ENCODE measurements at regions of chr9 and their contacts with region 1.

Region 1: GRCh38 chr9:94805585-94805984 is 79.1 kb downstream of the AOPEP start:
- DNase-seq: no peak
- ATAC-seq: peak; percentile 38

Region 2: DNA sequence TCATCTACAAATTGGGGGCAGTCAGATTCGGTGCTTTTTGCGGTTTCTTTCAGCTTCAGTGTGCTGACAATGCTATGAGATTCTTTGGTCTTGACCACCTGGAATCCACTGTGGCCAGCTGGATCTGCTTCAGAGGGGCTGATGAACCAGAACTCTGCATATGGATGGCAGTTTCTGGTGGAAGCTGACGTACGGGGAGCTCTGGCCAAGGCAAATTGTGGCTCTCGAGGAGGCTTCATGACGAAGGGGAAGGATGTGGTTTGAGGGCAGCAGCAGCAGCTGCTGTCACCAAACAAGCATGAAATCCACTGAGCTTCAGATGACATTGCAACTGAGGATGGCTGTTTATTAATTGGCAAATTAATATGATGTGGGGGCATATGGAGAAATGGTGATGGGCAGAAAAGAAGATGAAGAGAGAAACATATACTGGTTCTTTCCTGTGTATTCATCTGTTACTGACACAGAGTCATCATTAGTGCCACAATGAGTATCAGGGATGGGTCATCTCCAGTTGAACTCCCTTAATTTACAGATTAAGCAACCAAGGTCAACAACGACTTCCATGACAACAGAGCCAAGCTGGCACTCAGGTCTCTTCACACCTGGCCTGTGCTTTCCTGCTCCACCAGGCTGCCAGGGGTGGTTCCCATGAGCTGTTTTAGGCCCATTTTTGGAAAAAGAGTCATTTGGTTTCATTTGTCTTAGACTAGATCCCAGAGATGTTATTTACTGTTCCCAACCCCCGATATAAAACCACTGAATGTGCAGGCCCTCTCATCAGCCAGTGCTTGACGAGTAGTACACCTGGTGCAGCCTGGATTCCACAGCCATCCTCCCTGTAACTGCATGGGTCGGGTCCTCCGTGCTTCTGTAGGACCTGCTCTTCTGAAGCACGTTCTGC is 55.6 kb after region 1 on chr9:
- intact Hi-C with region 1: loop called (anchors 10 kb)
- DNase-seq: no peak
- ATAC-seq: no peak

Region 3: GRCh38 chr9:94973451-94973941 is 167.9 kb after region 1 on chr9:
- intact Hi-C with region 1: no loop called
- DNase-seq: no peak
- ATAC-seq: peak; percentile 8